IMR-90 (cell line): ENCODE measurements at regions of chr6 and their contacts with region 1.

Region 1: GRCh38 chr6:113909234-113909856 is 52.2 kb downstream of the MARCKS start:
- DNase-seq: peak; percentile 79
- ATAC-seq: peak; percentile 59
- H3K4me3 ChIP-seq: no peak overlapping the region
- H3K27ac ChIP-seq: no peak overlapping the region
- H3K4me1 ChIP-seq: peaks cover 2% of the 10 kb centered on the region
- H3K27me3 ChIP-seq: no peaks in the 10 kb centered on the region
- CTCF ChIP-seq: peak; percentile 76
- POLR2A ChIP-seq: no peak
- RAD21 ChIP-seq: peak; percentile 83

Region 2: DNA sequence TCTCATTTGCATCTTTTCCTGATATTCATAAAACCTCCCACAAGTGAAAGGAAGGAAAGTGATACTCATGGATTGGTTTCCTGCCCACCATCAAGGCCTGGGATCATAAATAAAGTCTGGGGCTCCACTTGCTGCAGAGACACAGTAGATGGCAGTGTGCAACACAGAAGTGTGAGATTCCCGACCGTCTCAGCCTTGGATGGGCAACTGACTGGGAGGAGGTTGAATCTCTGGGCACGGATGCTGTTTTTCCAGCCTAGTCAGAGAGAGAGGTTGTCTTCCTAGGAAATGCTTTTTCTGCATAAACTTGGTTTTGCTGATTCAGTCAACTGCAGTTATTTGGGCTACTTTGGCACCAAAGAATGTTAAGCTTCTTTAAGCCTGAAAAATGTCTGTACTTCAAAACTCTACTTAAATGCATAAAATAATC is 1572.1 kb before region 1 on chr6:
- CTCF ChIA-PET with region 1: no interaction called
- POLR2A ChIA-PET with region 1: no interaction called
- dilution Hi-C with region 1: no loop called
- in situ Hi-C with region 1: loop called (anchors 10 kb)
- intact Hi-C with region 1: no loop called
- DNase-seq: peak; percentile 83
- ATAC-seq: peak; percentile 91
- H3K4me3 ChIP-seq: no peak overlapping the region
- H3K27ac ChIP-seq: no peak overlapping the region
- H3K4me1 ChIP-seq: peaks cover 4% of the 10 kb centered on the region
- H3K27me3 ChIP-seq: no peaks in the 10 kb centered on the region
- CTCF ChIP-seq: peak; percentile 78
- POLR2A ChIP-seq: no peak
- RAD21 ChIP-seq: peak; percentile 80

Region 3: DNA sequence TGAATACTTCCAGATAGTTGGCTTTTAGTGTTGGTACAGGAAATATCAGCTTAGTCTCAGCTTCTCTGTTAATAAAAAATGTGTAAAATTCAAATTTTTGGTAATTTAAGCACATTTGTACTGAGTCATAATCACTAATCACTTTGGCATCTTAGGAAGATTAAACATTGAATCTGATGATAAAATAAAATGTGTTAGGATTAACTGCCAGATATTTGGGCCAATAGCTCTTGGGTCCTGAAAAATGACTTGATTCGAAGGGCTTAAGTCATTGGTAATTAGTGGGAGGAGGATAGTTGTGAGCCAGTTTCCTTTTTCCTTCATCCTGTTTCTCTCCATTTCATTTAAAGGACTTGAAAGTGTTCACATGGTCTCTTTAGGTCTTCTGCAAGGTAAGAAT is 1136.2 kb before region 1 on chr6:
- CTCF ChIA-PET with region 1: no interaction called
- POLR2A ChIA-PET with region 1: no interaction called
- dilution Hi-C with region 1: no loop called
- in situ Hi-C with region 1: loop called (anchors 10 kb)
- intact Hi-C with region 1: no loop called
- DNase-seq: peak; percentile 33
- ATAC-seq: peak; percentile 61
- H3K4me3 ChIP-seq: no peak overlapping the region
- H3K27ac ChIP-seq: no peak overlapping the region
- H3K4me1 ChIP-seq: peaks cover 2% of the 10 kb centered on the region
- H3K27me3 ChIP-seq: no peaks in the 10 kb centered on the region
- CTCF ChIP-seq: no peak
- POLR2A ChIP-seq: no peak
- RAD21 ChIP-seq: no peak